Mammary epithelial cell (primary cell): ENCODE measurements at regions of chr16 and their contacts with region 1.

Region 1: DNA sequence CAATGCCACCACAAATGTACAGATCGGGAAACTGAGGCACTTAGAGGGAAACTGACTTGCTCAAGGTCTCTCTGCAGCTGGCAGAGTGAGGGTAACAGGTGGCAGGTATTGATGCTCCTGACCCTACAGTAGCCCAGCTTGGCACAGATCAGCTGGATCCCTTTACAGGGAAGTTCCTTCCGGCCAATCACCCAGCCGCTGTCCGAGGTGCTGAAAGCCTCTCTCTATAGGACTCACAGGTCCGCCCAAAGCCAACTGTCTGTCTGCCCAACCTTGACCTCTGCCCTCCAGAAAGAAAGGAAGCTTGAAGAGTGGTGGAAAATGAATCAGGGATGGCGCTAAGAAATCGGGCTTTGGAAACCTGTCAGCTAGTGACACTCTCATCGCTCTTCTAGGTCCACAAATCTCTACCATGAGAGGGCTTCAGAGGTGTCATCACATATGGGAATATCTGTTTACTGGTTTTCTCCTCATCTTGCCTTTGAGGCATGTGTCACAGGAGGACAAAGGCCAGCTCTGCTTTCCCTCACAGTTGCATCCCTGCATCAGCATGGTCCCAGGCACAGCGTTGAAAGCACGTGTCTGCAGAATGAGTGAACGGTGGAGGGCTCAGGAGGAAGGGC is 246.2 kb downstream of the KATNIP start:
- DNase-seq: peak; percentile 19
- H3K4me3 ChIP-seq: no peak overlapping the region
- H3K27ac ChIP-seq: no peak overlapping the region
- H3K4me1 ChIP-seq: no peaks in the 10 kb centered on the region
- H3K27me3 ChIP-seq: no peaks in the 10 kb centered on the region
- CTCF ChIP-seq: no peak

Region 2: DNA sequence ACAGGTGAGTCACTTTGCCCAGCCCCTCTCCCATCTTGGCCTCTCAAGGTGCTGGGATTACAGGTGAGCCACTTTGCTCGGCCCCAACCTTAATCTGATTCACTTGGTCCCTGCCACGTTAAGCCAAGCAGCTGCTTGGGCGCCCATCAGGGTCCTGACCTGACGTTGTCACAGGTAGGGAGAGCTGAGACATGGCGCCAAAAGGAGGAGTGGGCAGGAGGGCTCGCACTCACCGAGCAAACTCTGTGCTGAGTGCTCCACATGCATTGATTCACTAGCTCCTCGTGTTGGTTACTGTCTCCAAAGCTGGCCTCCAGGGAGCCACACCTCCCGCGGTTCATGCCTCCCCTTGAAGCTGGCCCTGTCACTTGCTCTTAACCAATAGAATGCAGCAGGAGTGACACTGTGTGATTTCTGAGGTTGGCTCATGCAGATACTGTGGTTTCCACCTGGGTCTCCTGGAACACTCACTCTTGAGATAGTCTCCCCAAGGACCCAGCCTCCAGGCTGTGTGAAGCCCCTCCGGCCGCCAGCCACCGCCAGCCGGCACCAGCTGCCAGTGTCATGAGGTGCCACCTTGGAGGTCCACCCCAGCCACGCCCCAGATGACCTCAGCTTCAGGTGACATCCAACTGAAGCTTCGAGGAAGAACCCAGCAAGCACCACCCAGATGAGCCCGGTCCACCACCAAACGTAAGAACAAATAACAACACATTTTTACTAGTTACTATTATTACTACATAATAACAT is 44.4 kb after region 1 on chr16:
- CTCF ChIA-PET with region 1: no interaction called
- dilution Hi-C with region 1: loop called (anchors 5 kb)
- in situ Hi-C with region 1: no loop called
- intact Hi-C with region 1: no loop called
- DNase-seq: no peak
- H3K4me3 ChIP-seq: no peak overlapping the region
- H3K27ac ChIP-seq: no peak overlapping the region
- H3K4me1 ChIP-seq: no peaks in the 10 kb centered on the region
- H3K27me3 ChIP-seq: no peaks in the 10 kb centered on the region
- CTCF ChIP-seq: no peak